ENCODE measurements at regions of chr19 and their contacts with region 1.

Region 1: GRCh38 chr19:20923077-20923871 is at the start of gene ZNF85:
- DNase-seq: peak; percentile 86
- H3K4me3 ChIP-seq: peak within 1 kb of the TSS; percentile 79
- H3K27ac ChIP-seq: peak within 1 kb of the TSS; percentile 44; the same call in 1 of the 2 replicates
- H3K4me1 ChIP-seq: no peaks in the 10 kb centered on the region; the same call in 1 of the 2 replicates
- H3K27me3 ChIP-seq: no peaks in the 10 kb centered on the region
- CTCF ChIP-seq: no peak
- total RNA-seq, gene ZNF85: 5.7 and 6.4 TPM in 2 replicates

Region 2: GRCh38 chr19:19937403-19937802 is 985.9 kb before region 1 on chr19:
- CTCF ChIA-PET with region 1: no interaction called
- POLR2A ChIA-PET with region 1: interaction called, 11 read pairs
- intact Hi-C with region 1: no loop called
- DNase-seq: no peak
- H3K4me3 ChIP-seq: no peak overlapping the region
- H3K27ac ChIP-seq: no peak overlapping the region
- H3K4me1 ChIP-seq: no peaks in the 10 kb centered on the region
- H3K27me3 ChIP-seq: no peaks in the 10 kb centered on the region
- CTCF ChIP-seq: no peak

Region 3: GRCh38 chr19:20840371-20840770 is 82.9 kb before region 1 on chr19:
- CTCF ChIA-PET with region 1: no interaction called
- POLR2A ChIA-PET with region 1: no interaction called
- intact Hi-C with region 1: no loop called
- DNase-seq: peak; percentile 7 to 65
- H3K4me3 ChIP-seq: no peak overlapping the region
- H3K27ac ChIP-seq: peak overlapping the region; percentile 26; the same call in 1 of the 2 replicates
- H3K4me1 ChIP-seq: 0 out of 2 replicates have a peak, but pooled peaks cover 9% of the 10 kb centered on the region
- H3K27me3 ChIP-seq: no peaks in the 10 kb centered on the region
- CTCF ChIP-seq: no peak

Region 4: DNA sequence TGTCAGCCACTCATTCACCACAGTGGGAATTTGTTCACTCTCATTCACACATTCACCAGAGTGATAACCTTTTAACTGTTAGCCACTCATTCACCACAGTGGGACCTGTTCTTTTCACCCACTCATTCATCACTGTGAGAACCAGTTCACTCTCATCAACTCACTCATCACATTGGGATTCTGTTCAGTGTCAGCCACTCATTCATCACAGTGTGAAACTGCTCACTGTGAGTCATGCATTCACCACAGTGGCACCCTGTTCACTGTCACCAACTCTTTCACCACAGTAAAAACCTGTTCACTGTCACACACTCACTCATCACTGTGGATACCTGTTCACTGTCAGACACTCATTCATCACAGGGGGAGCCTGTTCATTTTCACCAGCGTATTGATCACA is 43.8 kb before region 1 on chr19:
- CTCF ChIA-PET with region 1: no interaction called
- POLR2A ChIA-PET with region 1: no interaction called
- intact Hi-C with region 1: no loop called
- DNase-seq: no peak
- H3K4me3 ChIP-seq: no peak overlapping the region
- H3K27ac ChIP-seq: no peak overlapping the region
- H3K4me1 ChIP-seq: no peaks in the 10 kb centered on the region
- H3K27me3 ChIP-seq: no peaks in the 10 kb centered on the region
- CTCF ChIP-seq: no peak